ENCODE measurements at regions of chr10 and their contacts with region 1.

Region 1: GRCh38 chr10:46006219-46006618 is 24.2 kb downstream of the NCOA4 start:
- DNase-seq: no peak
- H3K4me3 ChIP-seq: no peak overlapping the region
- H3K27ac ChIP-seq: no peak overlapping the region
- H3K4me1 ChIP-seq: no peaks in the 10 kb centered on the region
- H3K27me3 ChIP-seq: peaks cover 0 to 1% (median 0%) of the 10 kb centered on the region in 4 experiments; a peak in 1 of 7 replicates
- CTCF ChIP-seq: no peak
- EP300 ChIP-seq: no peak
- POLR2A ChIP-seq: no peak
- RAD21 ChIP-seq: no peak

Region 2: GRCh38 chr10:46019569-46020343 is 13.5 kb after region 1 on chr10:
- CTCF ChIA-PET with region 1: interaction called, 5 read pairs
- POLR2A ChIA-PET with region 1: interaction called, 10 read pairs
- DNase-seq: no peak
- H3K4me3 ChIP-seq: no peak overlapping the region
- H3K27ac ChIP-seq: no peak overlapping the region
- H3K4me1 ChIP-seq: peaks cover 0 to 7% (median 3%) of the 10 kb centered on the region in 4 experiments; a peak in 3 of 7 replicates
- H3K27me3 ChIP-seq: no peaks in the 10 kb centered on the region
- CTCF ChIP-seq: no peak
- EP300 ChIP-seq: no peak
- POLR2A ChIP-seq: no peak
- RAD21 ChIP-seq: no peak